ENCODE measurements at regions of chr3 and their contacts with region 1.

Region 1: GRCh38 chr3:187738331-187739093 is 6.8 kb downstream of the BCL6 start:
- DNase-seq: peak; percentile 77
- H3K4me3 Mint-ChIP-seq: peak overlapping the region; percentile 89
- H3K27ac Mint-ChIP-seq: peak overlapping the region; percentile 99
- H3K4me1 Mint-ChIP-seq: peaks cover 48% of the 10 kb centered on the region
- H3K27me3 Mint-ChIP-seq: peaks cover 3% of the 10 kb centered on the region

Region 2: DNA sequence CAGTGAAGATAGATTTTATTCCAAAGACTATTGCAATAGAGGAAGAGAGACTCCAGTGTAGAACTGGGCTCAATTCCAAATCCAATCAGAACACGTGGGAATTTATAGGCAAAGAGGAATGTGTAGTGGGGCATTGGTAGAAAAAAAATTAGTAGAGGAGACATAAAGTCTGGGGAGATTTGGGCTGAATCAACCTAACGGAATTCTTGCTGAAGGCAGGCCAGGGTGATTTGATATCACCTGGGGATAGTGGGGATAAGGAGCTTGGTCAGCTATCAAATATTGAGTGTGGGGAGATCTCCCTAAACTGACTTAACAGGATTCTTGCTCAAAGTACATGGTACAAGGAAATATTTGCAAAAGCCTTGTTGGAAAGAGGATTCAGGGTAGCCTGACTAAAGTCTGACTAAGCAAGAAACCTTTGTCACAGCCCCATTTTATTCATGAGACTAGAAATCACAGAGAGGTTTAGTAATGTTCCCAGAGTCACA is 97.9 kb before region 1 on chr3:
- CTCF ChIA-PET with region 1: no interaction called
- POLR2A ChIA-PET with region 1: no interaction called
- DNase-seq: no peak
- H3K4me3 Mint-ChIP-seq: no peak overlapping the region
- H3K27ac Mint-ChIP-seq: no peak overlapping the region
- H3K4me1 Mint-ChIP-seq: no peaks in the 10 kb centered on the region
- H3K27me3 Mint-ChIP-seq: peaks cover 19% of the 10 kb centered on the region

Region 3: GRCh38 chr3:187935623-187936156 is 197.2 kb after region 1 on chr3:
- CTCF ChIA-PET with region 1: interaction called, 10 read pairs
- POLR2A ChIA-PET with region 1: no interaction called
- DNase-seq: peak; percentile 63
- H3K4me3 Mint-ChIP-seq: no peak overlapping the region
- H3K27ac Mint-ChIP-seq: peak overlapping the region; percentile 4
- H3K4me1 Mint-ChIP-seq: peaks cover 20% of the 10 kb centered on the region
- H3K27me3 Mint-ChIP-seq: peaks cover 64% of the 10 kb centered on the region

Region 4: DNA sequence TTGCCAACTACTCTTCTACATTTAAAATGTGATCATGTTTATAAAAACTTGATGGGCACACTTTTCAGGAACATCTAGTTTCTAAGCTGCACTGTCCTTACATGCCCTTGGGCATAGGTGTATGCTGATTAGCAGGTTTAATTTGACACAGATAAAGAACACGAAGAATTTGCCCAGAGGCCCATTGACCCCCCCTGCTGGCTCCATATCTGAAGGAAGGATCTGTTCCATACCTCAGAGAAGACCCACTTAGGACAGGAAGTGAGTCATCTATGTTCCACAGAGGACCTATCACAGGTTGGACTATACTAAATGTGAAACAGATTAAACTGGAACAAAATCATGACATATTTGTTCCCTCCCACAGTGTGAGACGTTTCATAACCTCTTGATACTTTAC is 322.6 kb after region 1 on chr3:
- CTCF ChIA-PET with region 1: interaction called, 10 read pairs
- POLR2A ChIA-PET with region 1: interaction called, 3 read pairs
- DNase-seq: peak; percentile 63
- H3K4me3 Mint-ChIP-seq: no peak overlapping the region
- H3K27ac Mint-ChIP-seq: no peak overlapping the region
- H3K4me1 Mint-ChIP-seq: peaks cover 18% of the 10 kb centered on the region
- H3K27me3 Mint-ChIP-seq: no peaks in the 10 kb centered on the region

Region 5: GRCh38 chr3:188296761-188297612 is 558.5 kb after region 1 on chr3:
- CTCF ChIA-PET with region 1: interaction called, 25 read pairs
- POLR2A ChIA-PET with region 1: interaction called, 3 read pairs
- DNase-seq: no peak
- H3K4me3 Mint-ChIP-seq: no peak overlapping the region
- H3K27ac Mint-ChIP-seq: no peak overlapping the region
- H3K4me1 Mint-ChIP-seq: peaks cover 45% of the 10 kb centered on the region
- H3K27me3 Mint-ChIP-seq: peaks cover 3% of the 10 kb centered on the region

Region 6: GRCh38 chr3:188620752-188621151 is 882.2 kb after region 1 on chr3:
- CTCF ChIA-PET with region 1: interaction called, 10 read pairs
- POLR2A ChIA-PET with region 1: no interaction called
- DNase-seq: no peak
- H3K4me3 Mint-ChIP-seq: no peak overlapping the region
- H3K27ac Mint-ChIP-seq: no peak overlapping the region
- H3K4me1 Mint-ChIP-seq: no peaks in the 10 kb centered on the region
- H3K27me3 Mint-ChIP-seq: no peaks in the 10 kb centered on the region

Region 7: DNA sequence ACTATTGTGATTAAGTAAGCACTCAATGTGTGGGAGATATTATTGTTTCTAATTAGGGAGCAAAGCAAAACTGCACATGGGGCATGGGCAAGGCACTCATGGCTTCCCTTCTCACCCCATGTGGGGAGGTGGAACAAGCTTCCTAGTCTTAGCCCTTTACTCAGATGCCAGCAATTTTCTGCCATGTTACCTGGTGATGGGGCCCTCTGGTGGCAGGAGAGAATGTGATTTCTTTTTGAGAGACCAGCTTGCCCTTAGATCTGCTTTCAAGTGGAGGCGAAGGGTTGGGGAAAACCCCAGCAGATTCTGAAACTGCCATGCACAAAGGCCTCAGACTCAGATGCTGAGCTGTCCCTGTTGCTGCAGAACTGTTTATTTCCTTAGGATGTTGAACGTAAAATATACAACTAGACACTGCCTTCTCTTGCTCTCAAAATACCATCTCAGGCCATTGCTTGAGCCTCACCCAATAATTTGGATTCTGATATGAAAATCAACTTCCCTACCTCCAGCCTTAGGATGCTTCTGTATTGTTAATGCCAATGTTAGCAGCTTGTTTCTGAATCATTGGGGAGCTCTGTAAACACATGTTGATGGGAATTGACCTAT is 1303.1 kb after region 1 on chr3:
- CTCF ChIA-PET with region 1: interaction called, 58 read pairs
- POLR2A ChIA-PET with region 1: interaction called, 17 read pairs
- DNase-seq: peak; percentile 78
- H3K4me3 Mint-ChIP-seq: no peak overlapping the region
- H3K27ac Mint-ChIP-seq: peak overlapping the region; percentile 49
- H3K4me1 Mint-ChIP-seq: peaks cover 46% of the 10 kb centered on the region
- H3K27me3 Mint-ChIP-seq: no peaks in the 10 kb centered on the region

Measured in activated CD4-positive, alpha-beta memory T cell treated with anti-CD3 and anti-CD28 coated beads, Interleukin-2, amount 10 ng/mL, durations not matched to agents 7 days and 5 days (primary cell).